Ovary (tissue), 10 donors: ENCODE measurements at regions of chr3 and their contacts with region 1.

Region 1: DNA sequence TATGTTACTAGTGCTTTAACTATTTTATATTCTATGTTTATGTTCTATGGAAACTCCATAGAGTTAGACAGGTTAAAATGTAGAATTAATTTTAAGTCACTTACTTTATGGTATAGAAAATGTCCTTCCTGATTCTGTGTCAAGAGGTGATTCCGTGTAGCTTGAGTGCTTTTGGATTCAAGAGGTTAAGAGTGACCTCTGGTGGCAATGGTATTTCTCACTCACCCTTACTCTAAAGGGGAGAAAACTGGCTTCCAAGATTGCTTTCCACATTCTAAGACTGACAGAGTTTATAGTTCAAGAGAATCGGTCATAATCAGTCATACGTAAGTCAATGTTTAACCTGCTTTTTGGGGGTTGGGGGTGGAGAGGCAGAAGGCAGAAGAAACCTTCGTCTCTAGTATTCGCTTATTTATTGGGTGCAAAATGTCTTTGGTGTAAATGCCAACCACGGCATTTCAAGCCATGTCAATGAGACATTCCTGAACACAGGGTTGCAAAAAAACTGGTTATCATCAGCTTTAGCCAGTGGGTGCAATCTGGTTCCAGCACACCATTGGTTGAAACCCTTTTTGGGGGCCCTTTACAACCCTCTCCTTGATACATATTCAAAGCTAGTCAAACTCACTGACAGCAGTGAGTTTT is 92.0 kb upstream of the VGLL3 start:
- DNase-seq: peak in 1 of 5 donors; percentile 20
- H3K4me3 ChIP-seq: no peak overlapping the region
- H3K27ac ChIP-seq: no peak overlapping the region
- H3K4me1 ChIP-seq: no peaks in the 10 kb centered on the region
- H3K27me3 ChIP-seq: no peaks in the 10 kb centered on the region
- CTCF ChIP-seq: peak; percentile 38 to 52 (median 43)
- EP300 ChIP-seq: no peak
- POLR2A ChIP-seq: no peak

Region 2: GRCh38 chr3:86785386-86785785 is 297.5 kb before region 1 on chr3:
- intact Hi-C with region 1: no loop called
- DNase-seq: no peak
- H3K4me3 ChIP-seq: no peak overlapping the region
- H3K27ac ChIP-seq: no peak overlapping the region
- H3K4me1 ChIP-seq: peaks cover 3% of the 10 kb centered on the region
- H3K27me3 ChIP-seq: no peaks in the 10 kb centered on the region
- CTCF ChIP-seq: no peak
- EP300 ChIP-seq: no peak
- POLR2A ChIP-seq: no peak

Region 3: GRCh38 chr3:86990734-86991481 is 92.0 kb before region 1 on chr3 and contains the start of gene VGLL3:
- intact Hi-C with region 1: loop called in 1 of 4 experiments (anchors 10 kb)
- DNase-seq: peak; percentile 80 to 87 (median 81)
- H3K4me3 ChIP-seq: peak within 1 kb of the TSS; percentile 70
- H3K27ac ChIP-seq: peak within 1 kb of the TSS; percentile 76 to 95
- H3K4me1 ChIP-seq: peaks cover 2% of the 10 kb centered on the region
- H3K27me3 ChIP-seq: no peaks in the 10 kb centered on the region
- CTCF ChIP-seq: no peak
- EP300 ChIP-seq: no peak
- POLR2A ChIP-seq: peak; percentile 26
- total RNA-seq, gene VGLL3: 13.4 to 36.3 (median 30.9) TPM